ENCODE measurements at regions of chr2 and their contacts with region 1.

Region 1: GRCh38 chr2:54149638-54150441 is 34.4 kb downstream of the ACYP2 start:
- DNase-seq: no peak
- H3K4me3 ChIP-seq: no peak overlapping the region
- H3K27ac ChIP-seq: no peak overlapping the region
- H3K4me1 ChIP-seq: no peaks in the 10 kb centered on the region
- H3K27me3 ChIP-seq: no peaks in the 10 kb centered on the region
- CTCF ChIP-seq: no peak
- POLR2A ChIP-seq: no peak

Region 2: GRCh38 chr2:53600815-53601214 is 549.0 kb before region 1 on chr2:
- CTCF ChIA-PET with region 1: no interaction called
- POLR2A ChIA-PET with region 1: no interaction called
- dilution Hi-C with region 1: no loop called
- intact Hi-C with region 1: no loop called
- DNase-seq: no peak
- H3K4me3 ChIP-seq: no peak overlapping the region
- H3K27ac ChIP-seq: no peak overlapping the region
- H3K4me1 ChIP-seq: no peaks in the 10 kb centered on the region
- H3K27me3 ChIP-seq: no peaks in the 10 kb centered on the region
- CTCF ChIP-seq: no peak
- POLR2A ChIP-seq: no peak

Region 3: DNA sequence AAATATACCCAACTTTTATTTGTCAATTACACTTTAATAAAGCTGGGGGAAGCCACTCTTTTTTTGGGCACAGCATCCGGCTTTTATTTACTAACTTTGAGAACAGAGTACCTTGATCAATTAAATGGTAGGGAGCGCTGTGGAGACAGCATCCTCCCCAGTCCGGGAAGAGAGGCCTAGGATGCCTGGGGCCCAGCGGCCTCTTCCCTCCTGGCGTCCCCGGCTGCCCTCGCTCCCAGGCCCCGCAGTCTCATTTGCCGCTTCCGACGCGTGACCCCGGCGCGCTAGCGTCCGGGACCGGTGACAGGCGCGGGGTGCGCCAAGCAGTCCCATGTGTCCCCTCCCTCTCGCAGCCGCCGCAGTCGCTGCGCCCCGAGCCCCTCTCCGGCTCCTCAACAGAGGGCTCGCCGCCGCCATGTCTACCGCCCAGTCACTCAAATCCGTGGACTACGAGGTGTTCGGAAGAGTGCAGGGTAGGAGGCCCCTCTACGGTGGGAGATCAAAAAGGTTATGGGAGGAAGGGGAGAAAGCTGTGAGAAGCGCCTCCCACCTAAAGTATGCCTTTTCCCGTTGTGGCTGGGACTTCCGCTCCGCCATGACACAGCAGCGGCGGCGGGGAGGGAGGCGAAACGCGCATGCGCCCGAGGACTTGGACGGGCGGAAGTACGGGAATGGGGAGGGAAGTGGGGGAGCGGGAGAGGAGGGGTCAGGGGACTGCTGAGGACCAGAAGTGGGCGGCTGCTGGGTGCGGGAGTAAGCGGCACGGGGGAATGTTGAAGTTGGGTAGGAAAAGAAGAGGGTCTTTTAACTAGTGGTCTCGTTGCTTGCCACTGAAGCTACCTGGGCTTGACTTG is 34.3 kb before region 1 on chr2 and contains the start of gene ACYP2:
- CTCF ChIA-PET with region 1: no interaction called
- POLR2A ChIA-PET with region 1: no interaction called
- dilution Hi-C with region 1: no loop called
- intact Hi-C with region 1: no loop called
- DNase-seq: peak; percentile 92
- H3K4me3 ChIP-seq: peak within 1 kb of the TSS; percentile 53 to 91 (median 74)
- H3K27ac ChIP-seq: peak within 1 kb of the TSS; percentile 93
- H3K4me1 ChIP-seq: peaks cover 6% of the 10 kb centered on the region
- H3K27me3 ChIP-seq: no peaks in the 10 kb centered on the region
- CTCF ChIP-seq: peak in 1 of 2 donors; percentile 25
- POLR2A ChIP-seq: no peak
- total RNA-seq, gene ACYP2: 5.8 and 7.9 TPM in 2 replicates

Region 4: GRCh38 chr2:54161660-54162424 is 12.0 kb after region 1 on chr2:
- CTCF ChIA-PET with region 1: interaction called, 13 read pairs
- POLR2A ChIA-PET with region 1: no interaction called
- dilution Hi-C with region 1: no loop called
- intact Hi-C with region 1: no loop called
- DNase-seq: peak; percentile 22
- H3K4me3 ChIP-seq: no peak overlapping the region
- H3K27ac ChIP-seq: no peak overlapping the region
- H3K4me1 ChIP-seq: no peaks in the 10 kb centered on the region
- H3K27me3 ChIP-seq: no peaks in the 10 kb centered on the region
- CTCF ChIP-seq: no peak
- POLR2A ChIP-seq: no peak

Region 5: DNA sequence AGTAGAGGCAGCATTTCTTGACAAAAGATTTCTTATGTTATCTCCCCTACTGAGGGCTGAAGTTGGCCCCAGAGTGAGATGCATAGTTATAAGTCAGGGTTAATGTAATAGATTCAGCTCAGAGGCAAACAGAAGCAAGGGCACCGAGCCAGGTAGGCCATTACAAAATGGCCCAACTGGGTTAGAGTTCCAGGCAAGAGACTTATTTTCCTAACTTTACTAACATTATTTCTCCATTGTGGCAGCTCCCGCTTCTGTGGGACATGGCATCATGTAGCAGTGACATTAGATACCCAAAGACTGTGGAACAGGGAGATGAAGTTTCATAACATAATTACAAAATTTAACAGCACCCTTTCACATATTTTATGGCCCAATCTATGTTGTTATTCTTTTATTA is 79.1 kb after region 1 on chr2:
- CTCF ChIA-PET with region 1: no interaction called
- POLR2A ChIA-PET with region 1: no interaction called
- dilution Hi-C with region 1: no loop called
- intact Hi-C with region 1: loop called (anchors 5 kb)
- DNase-seq: no peak
- H3K4me3 ChIP-seq: no peak overlapping the region
- H3K27ac ChIP-seq: no peak overlapping the region
- H3K4me1 ChIP-seq: peaks cover 8% of the 10 kb centered on the region
- H3K27me3 ChIP-seq: no peaks in the 10 kb centered on the region
- CTCF ChIP-seq: no peak
- POLR2A ChIP-seq: no peak

Region 6: DNA sequence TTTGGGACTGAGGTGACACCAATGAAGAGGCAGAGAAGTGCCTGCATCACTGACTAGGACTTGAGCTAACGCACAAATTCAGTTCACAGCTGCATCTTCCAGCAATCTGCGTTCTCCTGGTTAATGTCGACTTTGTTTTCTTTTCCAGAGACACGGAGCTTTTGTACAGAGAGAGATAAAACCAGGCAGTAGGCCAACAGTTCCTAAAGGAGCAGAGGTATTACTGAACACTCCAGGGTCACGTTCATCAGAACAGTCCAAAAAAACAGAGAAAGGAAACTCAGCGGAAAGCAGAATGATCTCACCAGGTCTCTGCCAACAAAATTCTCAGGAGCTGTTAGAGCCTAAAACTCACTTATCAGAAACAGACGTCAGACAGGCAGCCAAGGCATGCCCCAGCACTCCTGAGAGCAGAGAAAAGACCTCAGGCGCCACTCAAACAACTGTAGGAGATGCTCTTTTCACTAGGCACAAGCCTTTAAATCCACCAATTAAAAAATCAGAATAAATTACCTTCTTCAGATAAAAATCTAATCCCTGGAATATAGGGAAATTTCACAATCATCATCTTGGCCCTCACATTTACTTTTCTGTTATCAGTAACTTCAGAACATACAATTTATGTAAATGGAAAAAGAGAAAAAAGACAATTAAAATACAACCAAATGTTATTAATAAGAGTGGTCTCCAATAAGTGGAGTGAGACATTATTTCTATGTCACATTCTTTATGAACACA is 210.4 kb after region 1 on chr2:
- CTCF ChIA-PET with region 1: no interaction called
- POLR2A ChIA-PET with region 1: no interaction called
- dilution Hi-C with region 1: no loop called
- intact Hi-C with region 1: no loop called
- DNase-seq: peak; percentile 94
- H3K4me3 ChIP-seq: peak overlapping the region in 1 of 3 experiments; percentile 14
- H3K27ac ChIP-seq: peak overlapping the region; percentile 43
- H3K4me1 ChIP-seq: peaks cover 15% of the 10 kb centered on the region
- H3K27me3 ChIP-seq: no peaks in the 10 kb centered on the region
- CTCF ChIP-seq: no peak
- POLR2A ChIP-seq: no peak